Heart right ventricle (tissue), 16 donors: ENCODE measurements at regions of chr1 and their contacts with region 1.

Region 1: GRCh38 chr1:11645670-11646265 is 8.5 kb downstream of the FBXO2 start:
- DNase-seq: peak; percentile 69 to 82
- ATAC-seq: peak in 7 of 8 donors; percentile 30 to 59 (median 46)
- H3K4me3 ChIP-seq: no peak overlapping the region
- H3K27ac ChIP-seq: no peak overlapping the region
- H3K4me1 ChIP-seq: peaks cover 0 to 39% (median 21%) of the 10 kb centered on the region in 9 donors
- H3K27me3 ChIP-seq: peaks cover 3 to 71% (median 33%) of the 10 kb centered on the region in 7 donors
- CTCF ChIP-seq: peak; percentile 63 to 85 (median 81)

Region 2: DNA sequence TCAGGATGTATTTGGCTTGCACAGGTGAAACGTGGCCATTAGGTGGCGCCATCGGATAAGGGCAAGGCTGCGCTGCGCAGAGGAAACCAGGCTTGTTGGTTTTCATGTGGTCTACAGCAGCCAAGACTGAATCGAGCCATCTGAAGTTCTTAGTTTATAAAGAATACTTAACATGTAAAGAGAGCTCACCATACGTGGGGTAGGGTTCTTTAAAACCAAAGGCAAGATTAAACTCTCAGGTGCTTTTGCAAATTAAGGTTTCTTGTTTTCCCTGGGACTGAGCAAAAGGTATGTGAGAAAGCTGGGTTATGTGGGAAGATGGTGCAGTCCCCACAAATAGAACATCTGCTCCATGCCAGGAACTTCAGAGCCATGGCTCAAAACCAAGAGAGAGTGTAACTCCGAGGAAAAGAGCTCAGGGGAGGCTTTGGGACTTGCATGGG is 608.0 kb before region 1 on chr1:
- intact Hi-C with region 1: loop called (anchors 2 to 10 kb)
- DNase-seq: peak; percentile 82 to 88
- ATAC-seq: peak; percentile 86 to 97 (median 94)
- H3K4me3 ChIP-seq: no peak overlapping the region
- H3K27ac ChIP-seq: no peak overlapping the region
- H3K4me1 ChIP-seq: peaks cover 0 to 13% (median 3%) of the 10 kb centered on the region in 9 donors
- H3K27me3 ChIP-seq: no peaks in the 10 kb centered on the region
- CTCF ChIP-seq: peak; percentile 89 to 99 (median 97)

Region 3: GRCh38 chr1:11237356-11237755 is 408.4 kb before region 1 on chr1:
- intact Hi-C with region 1: loop called in 9 of 10 experiments (anchors 2 to 5 kb)
- DNase-seq: no peak
- ATAC-seq: peak in 6 of 8 donors; percentile 11 to 47 (median 25)
- H3K4me3 ChIP-seq: no peak overlapping the region
- H3K27ac ChIP-seq: peak overlapping the region in 8 of 10 donors; percentile 1 to 65 (median 44)
- H3K4me1 ChIP-seq: peaks cover 0 to 16% (median 9%) of the 10 kb centered on the region in 9 donors
- H3K27me3 ChIP-seq: no peaks in the 10 kb centered on the region
- CTCF ChIP-seq: no peak

Region 4: DNA sequence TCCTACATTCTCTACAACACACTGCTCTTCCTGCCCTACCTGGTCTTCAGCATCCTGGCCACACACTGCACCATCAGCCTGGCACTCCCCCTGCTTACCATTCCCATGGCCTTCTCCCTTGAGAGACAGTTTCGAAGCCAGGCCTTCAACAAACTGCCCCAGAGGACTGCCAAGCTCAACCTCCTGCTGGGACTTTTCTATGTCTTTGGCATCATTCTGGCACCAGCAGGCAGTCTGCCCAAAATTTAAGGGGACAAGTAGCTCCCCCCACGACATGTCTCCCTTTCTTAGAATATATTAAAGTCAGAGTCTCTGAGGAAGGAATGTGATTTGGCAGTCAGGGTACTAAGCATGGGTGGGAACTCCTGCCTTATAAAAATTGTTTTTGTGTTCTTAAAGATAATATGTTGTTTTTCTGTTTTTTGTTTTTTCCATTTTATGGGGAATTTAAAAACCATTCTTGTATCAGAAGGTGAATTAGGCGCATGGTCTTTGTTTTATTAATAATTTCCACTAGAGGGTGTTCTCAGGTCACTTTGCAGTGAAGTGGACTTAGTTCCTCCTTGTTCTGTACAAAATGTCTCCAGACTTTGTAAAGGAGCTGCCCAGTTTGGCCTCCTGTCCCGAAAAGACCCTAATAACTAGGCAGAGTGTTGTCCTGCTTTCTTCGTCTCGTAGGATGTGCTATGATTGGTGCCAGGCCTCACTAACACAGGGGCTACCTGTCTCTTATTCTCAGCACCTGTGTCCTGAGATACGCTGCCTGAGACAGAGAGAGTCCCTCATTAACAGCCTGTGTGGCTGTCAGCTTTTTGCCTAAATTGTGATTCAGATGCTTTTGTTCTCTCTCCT is 359.7 kb before region 1 on chr1:
- intact Hi-C with region 1: loop called in 1 of 10 experiments (anchors 10 kb)
- DNase-seq: no peak
- ATAC-seq: no peak
- H3K4me3 ChIP-seq: no peak overlapping the region
- H3K27ac ChIP-seq: no peak overlapping the region
- H3K4me1 ChIP-seq: peaks cover 0 to 18% (median 13%) of the 10 kb centered on the region in 9 donors
- H3K27me3 ChIP-seq: no peaks in the 10 kb centered on the region
- CTCF ChIP-seq: peak in 4 of 9 donors; percentile 15 to 34 (median 28)

Region 5: GRCh38 chr1:11307852-11308251 is 337.9 kb before region 1 on chr1:
- intact Hi-C with region 1: no loop called
- DNase-seq: no peak
- ATAC-seq: no peak
- H3K4me3 ChIP-seq: no peak overlapping the region
- H3K27ac ChIP-seq: no peak overlapping the region
- H3K4me1 ChIP-seq: no peaks in the 10 kb centered on the region
- H3K27me3 ChIP-seq: no peaks in the 10 kb centered on the region
- CTCF ChIP-seq: no peak

Region 6: DNA sequence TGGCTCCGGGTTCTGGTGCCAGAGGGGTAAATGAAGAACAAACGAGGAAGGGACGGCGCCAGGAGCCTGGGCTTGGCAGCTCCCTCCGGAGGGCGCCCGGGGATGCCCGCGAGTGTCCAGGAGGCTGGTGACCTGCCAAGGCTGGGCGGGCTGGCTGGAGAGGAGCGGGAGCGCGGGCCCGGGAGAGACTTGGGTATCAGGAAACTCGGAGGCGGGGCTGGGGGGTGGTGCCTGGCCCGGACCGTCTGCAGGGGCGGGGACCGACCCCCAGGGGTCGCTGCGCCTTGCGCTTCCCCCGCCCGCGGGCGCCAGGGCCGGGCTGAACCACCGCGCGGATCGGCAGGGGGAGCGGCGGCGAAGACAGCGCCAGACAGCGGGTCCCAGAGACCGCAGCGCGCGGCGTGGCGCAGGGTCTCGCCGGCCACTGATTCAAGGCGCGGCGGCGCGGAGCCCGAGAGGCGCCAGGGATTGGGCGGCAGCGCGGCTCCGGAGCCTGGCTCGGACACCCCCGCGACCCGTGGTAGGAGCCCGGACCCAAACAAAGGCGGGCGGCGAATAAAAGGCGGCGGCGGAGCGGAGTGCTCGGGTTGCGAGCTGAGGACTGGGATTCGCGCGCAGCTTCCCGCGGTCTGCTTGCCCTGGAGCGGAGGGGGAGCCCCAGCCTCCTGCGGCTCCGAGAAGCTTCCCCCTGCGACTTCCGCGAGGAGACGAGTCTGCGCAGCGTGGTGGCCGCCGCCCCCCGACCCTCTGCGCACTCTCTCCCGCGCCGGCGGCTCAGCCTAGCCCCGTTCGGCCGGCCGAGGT is 167.0 kb before region 1 on chr1 and contains the start of gene DISP3:
- intact Hi-C with region 1: loop called in 4 of 10 experiments (anchors 2 to 10 kb)
- DNase-seq: peak; percentile 44 to 52
- ATAC-seq: peak; percentile 73 to 87 (median 79)
- H3K4me3 ChIP-seq: peak within 1 kb of the TSS; percentile 38 to 63 (median 55)
- H3K27ac ChIP-seq: peak within 1 kb of the TSS in 1 of 10 donors; percentile 53
- H3K4me1 ChIP-seq: peaks cover 0 to 26% (median 16%) of the 10 kb centered on the region in 9 donors
- H3K27me3 ChIP-seq: peaks cover 5 to 90% (median 64%) of the 10 kb centered on the region in 7 donors
- CTCF ChIP-seq: peak; percentile 13 to 75 (median 59)
- total RNA-seq, gene DISP3: 0.05 to 0.21 (median 0.10) TPM in 6 of 10 donors, not detected in the others

Region 7: DNA sequence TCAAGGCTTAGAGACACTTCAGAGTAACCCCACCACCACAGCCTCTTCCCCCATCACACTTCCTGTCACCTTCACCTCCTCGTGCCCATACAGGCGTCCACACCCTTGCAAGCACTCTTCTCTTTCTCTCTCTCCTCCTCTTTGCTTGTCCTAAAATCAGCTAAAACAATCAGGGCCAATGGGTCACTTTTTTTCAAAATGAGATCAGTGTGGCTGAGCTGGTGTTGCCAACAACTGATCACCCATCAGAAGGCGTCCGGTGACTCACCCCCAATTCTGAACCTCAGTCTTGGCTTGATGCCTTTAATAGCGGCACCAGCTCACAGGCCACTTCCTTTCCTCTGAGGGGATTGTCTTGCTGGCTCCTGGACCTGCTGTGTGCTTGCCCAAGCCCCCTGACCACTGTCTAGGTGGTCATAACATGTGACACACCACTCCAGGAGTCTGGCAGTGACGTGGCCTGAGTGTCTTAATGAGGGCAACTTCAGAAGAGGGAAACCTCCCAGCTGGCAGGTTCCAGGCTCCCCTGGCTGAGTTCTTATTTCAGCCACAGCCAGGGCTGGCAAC is 47.3 kb after region 1 on chr1:
- intact Hi-C with region 1: no loop called
- DNase-seq: no peak
- ATAC-seq: peak in 2 of 8 donors; percentile 28 to 43
- H3K4me3 ChIP-seq: no peak overlapping the region
- H3K27ac ChIP-seq: no peak overlapping the region
- H3K4me1 ChIP-seq: peaks cover 0 to 29% (median 10%) of the 10 kb centered on the region in 9 donors
- H3K27me3 ChIP-seq: peaks cover 23 to 97% (median 86%) of the 10 kb centered on the region in 7 donors
- CTCF ChIP-seq: no peak

Region 8: GRCh38 chr1:11813021-11813420 is 167.3 kb after region 1 on chr1:
- intact Hi-C with region 1: no loop called
- DNase-seq: no peak
- ATAC-seq: no peak
- H3K4me3 ChIP-seq: no peak overlapping the region
- H3K27ac ChIP-seq: no peak overlapping the region
- H3K4me1 ChIP-seq: peaks cover 0 to 36% (median 9%) of the 10 kb centered on the region in 9 donors
- H3K27me3 ChIP-seq: no peaks in the 10 kb centered on the region
- CTCF ChIP-seq: no peak